Heart right ventricle (tissue), 16 donors: ENCODE measurements at regions of chr1 and their contacts with region 1.

Region 1: DNA sequence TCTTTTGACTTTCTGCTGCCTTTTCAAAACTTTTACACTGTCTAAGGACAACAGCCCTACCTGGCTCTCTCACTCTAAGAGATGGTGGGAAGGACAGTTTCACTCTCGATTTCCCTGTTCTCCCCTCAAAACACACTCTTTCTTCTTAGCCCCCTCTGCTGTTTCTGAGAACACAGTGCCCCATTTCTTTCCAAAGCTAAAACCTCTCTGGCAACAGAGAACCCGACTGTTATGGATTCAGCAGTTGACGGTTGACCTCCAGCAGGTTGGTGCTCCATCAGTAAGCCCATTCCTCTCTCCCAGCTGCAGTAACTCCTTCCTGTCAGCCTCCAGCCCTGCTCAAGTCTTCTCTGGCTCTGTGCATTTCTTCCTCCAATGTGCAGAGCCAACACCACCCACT is 88.2 kb upstream of the ABCD3 start:
- DNase-seq: peak in 1 of 2 donors; percentile 24
- ATAC-seq: peak in 6 of 8 donors; percentile 28 to 54 (median 41)
- H3K4me3 ChIP-seq: peak overlapping the region in 4 of 10 donors; percentile 5 to 18 (median 9)
- H3K27ac ChIP-seq: peak overlapping the region in 9 of 10 donors; percentile 34 to 91 (median 78)
- H3K4me1 ChIP-seq: peaks cover 0 to 83% (median 58%) of the 10 kb centered on the region in 9 donors
- H3K27me3 ChIP-seq: peaks cover 0 to 16% (median 0%) of the 10 kb centered on the region in 7 donors
- CTCF ChIP-seq: peak in 8 of 9 donors; percentile 38 to 71 (median 54)

Region 2: GRCh38 chr1:93909146-93910050 is 420.6 kb before region 1 on chr1 and contains the start of gene GCLM:
- intact Hi-C with region 1: loop called in 2 of 10 experiments (anchors 5 kb)
- DNase-seq: peak; percentile 89 to 95
- ATAC-seq: peak; percentile 96 to 99 (median 98)
- H3K4me3 ChIP-seq: peak within 1 kb of the TSS; percentile 23 to 100 (median 85)
- H3K27ac ChIP-seq: peak within 1 kb of the TSS; percentile 38 to 97 (median 88)
- H3K4me1 ChIP-seq: peaks cover 6 to 40% (median 16%) of the 10 kb centered on the region in 9 donors
- H3K27me3 ChIP-seq: no peaks in the 10 kb centered on the region
- CTCF ChIP-seq: peak; percentile 73 to 99 (median 92)
- total RNA-seq, gene GCLM: 7.6 to 15.5 (median 10.6) TPM

Region 3: GRCh38 chr1:94045465-94046056 is 284.4 kb before region 1 on chr1:
- intact Hi-C with region 1: loop called in 8 of 10 experiments (anchors 5 kb)
- DNase-seq: peak; percentile 88 to 94
- ATAC-seq: peak; percentile 88 to 95 (median 92)
- H3K4me3 ChIP-seq: peak overlapping the region in 5 of 10 donors; percentile 8 to 21 (median 12)
- H3K27ac ChIP-seq: peak overlapping the region; percentile 81 to 98 (median 92)
- H3K4me1 ChIP-seq: peaks cover 23 to 85% (median 64%) of the 10 kb centered on the region in 9 donors
- H3K27me3 ChIP-seq: no peaks in the 10 kb centered on the region
- CTCF ChIP-seq: peak; percentile 50 to 89 (median 73)

Region 4: GRCh38 chr1:94237291-94238226 is 92.4 kb before region 1 on chr1 and contains the start of gene ARHGAP29:
- intact Hi-C with region 1: loop called in 5 of 10 experiments (anchors 2 to 5 kb)
- DNase-seq: peak; percentile 87 to 90
- ATAC-seq: peak; percentile 93 to 99 (median 96)
- H3K4me3 ChIP-seq: peak within 1 kb of the TSS; percentile 75 to 100 (median 92)
- H3K27ac ChIP-seq: peak within 1 kb of the TSS; percentile 94 to 99 (median 98)
- H3K4me1 ChIP-seq: peaks cover 0 to 66% (median 30%) of the 10 kb centered on the region in 9 donors
- H3K27me3 ChIP-seq: peaks cover 0 to 86% (median 0%) of the 10 kb centered on the region in 7 donors
- CTCF ChIP-seq: peak in 2 of 9 donors; percentile 19 to 23
- total RNA-seq, gene ARHGAP29: 20.9 to 34.3 (median 28.8) TPM

Region 5: GRCh38 chr1:94247138-94248094 is 82.6 kb before region 1 on chr1:
- intact Hi-C with region 1: loop called in 5 of 10 experiments (anchors 2 to 5 kb)
- DNase-seq: peak; percentile 81 to 89
- ATAC-seq: peak; percentile 87 to 97 (median 94)
- H3K4me3 ChIP-seq: peak overlapping the region; percentile 57 to 88 (median 68)
- H3K27ac ChIP-seq: peak overlapping the region; percentile 84 to 96 (median 90)
- H3K4me1 ChIP-seq: peaks cover 0 to 15% (median 6%) of the 10 kb centered on the region in 9 donors
- H3K27me3 ChIP-seq: peaks cover 0 to 65% (median 0%) of the 10 kb centered on the region in 7 donors
- CTCF ChIP-seq: peak in 1 of 9 donors; percentile 6

Region 6: DNA sequence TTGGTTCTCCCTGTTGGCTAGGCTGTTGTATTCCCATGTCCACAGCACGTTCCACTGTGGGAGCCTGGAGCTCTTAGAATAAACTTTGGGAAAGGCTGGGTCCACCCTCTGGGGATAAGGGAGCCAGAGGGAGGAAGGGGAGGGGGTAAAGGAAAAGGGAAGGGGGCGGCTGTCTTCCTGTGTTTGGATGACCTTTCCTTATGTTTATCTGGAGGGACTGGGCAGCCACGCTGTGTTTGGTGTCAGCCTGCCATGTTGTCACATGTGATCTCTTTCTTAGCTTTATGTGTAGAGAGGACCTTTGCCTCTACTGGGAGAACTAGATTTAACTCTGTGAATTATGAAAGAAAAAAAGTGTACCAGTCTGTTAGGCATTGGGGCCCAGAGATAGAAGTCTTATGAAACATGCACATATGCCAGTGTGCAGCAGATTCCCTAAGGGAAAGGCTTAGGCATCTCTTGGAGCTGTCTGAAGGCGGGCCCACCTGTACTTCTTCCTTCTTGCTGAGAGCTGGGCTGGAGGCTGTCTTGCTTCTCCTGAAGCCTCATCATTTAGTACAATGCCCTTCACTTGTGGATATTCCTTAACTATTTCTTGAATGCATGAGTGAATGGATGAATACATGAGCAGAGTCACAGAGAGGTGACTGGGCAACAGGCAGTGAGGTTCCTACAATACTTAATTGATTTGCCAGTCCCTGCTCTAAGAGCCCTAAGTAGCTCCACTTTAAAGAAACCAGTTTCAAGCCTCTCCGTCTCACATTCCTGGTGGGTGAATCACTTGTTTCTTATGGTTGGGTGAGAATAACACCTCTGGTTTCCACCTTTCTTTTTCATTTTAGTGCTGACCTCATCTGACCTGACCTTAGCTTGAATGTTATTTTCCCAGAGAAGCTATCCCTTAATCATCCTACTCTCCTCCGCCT is 30.1 kb before region 1 on chr1:
- intact Hi-C with region 1: loop called in 1 of 10 experiments (anchors 1 kb)
- DNase-seq: peak; percentile 24 to 41
- ATAC-seq: peak in 7 of 8 donors; percentile 52 to 75 (median 71)
- H3K4me3 ChIP-seq: no peak overlapping the region
- H3K27ac ChIP-seq: peak overlapping the region; percentile 52 to 84 (median 72)
- H3K4me1 ChIP-seq: peaks cover 0 to 90% (median 64%) of the 10 kb centered on the region in 9 donors
- H3K27me3 ChIP-seq: no peaks in the 10 kb centered on the region
- CTCF ChIP-seq: no peak